Activated naive CD4-positive, alpha-beta T cell treated with anti-CD3 and anti-CD28 coated beads, Interleukin-2, amount 10 ng/mL, durations not matched to agents 7 days and 5 days (primary cell): ENCODE measurements at regions of chr2 and their contacts with region 1.

Region 1: DNA sequence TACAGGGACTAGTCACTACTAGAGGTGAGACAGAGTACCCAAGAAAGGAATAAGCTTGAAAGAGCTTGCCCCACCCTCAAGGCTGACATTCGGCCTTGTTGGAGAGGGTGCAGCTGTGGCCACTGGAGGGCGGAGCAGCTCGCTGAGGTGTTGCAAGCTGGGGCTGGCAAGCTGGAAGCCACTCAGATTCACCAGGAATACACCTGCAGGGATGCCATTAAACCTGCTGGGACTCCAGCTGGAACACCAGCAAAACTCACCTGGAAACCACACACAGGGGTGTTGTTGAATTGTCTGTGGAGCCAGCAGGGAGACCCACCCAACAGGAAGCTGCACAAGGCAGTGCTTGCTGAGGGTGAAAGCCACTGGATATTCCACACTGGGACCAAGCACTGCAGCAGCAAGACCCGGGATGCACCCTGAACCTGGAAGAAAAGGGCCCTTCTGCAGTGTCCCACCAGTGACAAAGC is 26.1 kb downstream of the KCTD18 start:
- DNase-seq: peak; percentile 60
- H3K4me3 Mint-ChIP-seq: no peak overlapping the region
- H3K27ac Mint-ChIP-seq: no peak overlapping the region
- H3K4me1 Mint-ChIP-seq: peaks cover 14% of the 10 kb centered on the region
- H3K27me3 Mint-ChIP-seq: no peaks in the 10 kb centered on the region

Region 2: GRCh38 chr2:199973703-199974102 is 510.1 kb before region 1 on chr2:
- CTCF ChIA-PET with region 1: interaction called, 28 read pairs
- DNase-seq: no peak
- H3K4me3 Mint-ChIP-seq: no peak overlapping the region
- H3K27ac Mint-ChIP-seq: no peak overlapping the region
- H3K4me1 Mint-ChIP-seq: peaks cover 13% of the 10 kb centered on the region
- H3K27me3 Mint-ChIP-seq: no peaks in the 10 kb centered on the region

Region 3: GRCh38 chr2:199979832-199980628 is 503.7 kb before region 1 on chr2:
- CTCF ChIA-PET with region 1: interaction called, 28 read pairs
- DNase-seq: peak; percentile 88
- H3K4me3 Mint-ChIP-seq: no peak overlapping the region
- H3K27ac Mint-ChIP-seq: no peak overlapping the region
- H3K4me1 Mint-ChIP-seq: peaks cover 22% of the 10 kb centered on the region
- H3K27me3 Mint-ChIP-seq: peaks cover 3% of the 10 kb centered on the region

Region 4: GRCh38 chr2:199985625-199986207 is 498.0 kb before region 1 on chr2:
- CTCF ChIA-PET with region 1: interaction called, 27 read pairs
- DNase-seq: peak; percentile 79
- H3K4me3 Mint-ChIP-seq: no peak overlapping the region
- H3K27ac Mint-ChIP-seq: peak overlapping the region; percentile 64
- H3K4me1 Mint-ChIP-seq: peaks cover 6% of the 10 kb centered on the region
- H3K27me3 Mint-ChIP-seq: peaks cover 3% of the 10 kb centered on the region

Region 5: GRCh38 chr2:200077210-200077650 is 406.5 kb before region 1 on chr2:
- CTCF ChIA-PET with region 1: no interaction called
- DNase-seq: no peak
- H3K4me3 Mint-ChIP-seq: no peak overlapping the region
- H3K27ac Mint-ChIP-seq: no peak overlapping the region
- H3K4me1 Mint-ChIP-seq: no peaks in the 10 kb centered on the region
- H3K27me3 Mint-ChIP-seq: no peaks in the 10 kb centered on the region

Region 6: GRCh38 chr2:200435379-200435778 is 48.4 kb before region 1 on chr2:
- CTCF ChIA-PET with region 1: no interaction called
- DNase-seq: no peak
- H3K4me3 Mint-ChIP-seq: no peak overlapping the region
- H3K27ac Mint-ChIP-seq: no peak overlapping the region
- H3K4me1 Mint-ChIP-seq: no peaks in the 10 kb centered on the region
- H3K27me3 Mint-ChIP-seq: no peaks in the 10 kb centered on the region

Region 7: GRCh38 chr2:200471324-200471848 is 12.4 kb before region 1 on chr2:
- CTCF ChIA-PET with region 1: interaction called, 40 read pairs
- DNase-seq: peak; percentile 49
- H3K4me3 Mint-ChIP-seq: no peak overlapping the region
- H3K27ac Mint-ChIP-seq: no peak overlapping the region
- H3K4me1 Mint-ChIP-seq: peaks cover 36% of the 10 kb centered on the region
- H3K27me3 Mint-ChIP-seq: no peaks in the 10 kb centered on the region

Region 8: DNA sequence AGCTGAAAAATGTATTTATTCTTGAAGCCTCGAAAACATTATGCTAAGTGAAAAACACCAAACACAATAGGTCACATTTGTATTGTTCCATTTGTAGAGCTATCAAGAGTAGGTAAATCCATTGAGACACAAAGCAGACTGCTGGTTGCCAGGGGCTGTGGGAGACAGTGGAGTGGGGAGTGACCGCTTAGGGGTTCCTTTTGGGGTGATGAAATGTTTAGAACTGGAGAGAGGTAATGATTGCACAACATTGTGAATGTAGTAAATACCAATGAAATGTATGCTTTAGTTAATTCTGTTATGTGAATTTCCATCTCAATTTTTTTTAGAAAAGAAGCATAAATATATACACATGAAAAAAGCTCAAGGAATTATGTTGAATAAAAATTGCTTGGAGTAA is 10.3 kb after region 1 on chr2:
- CTCF ChIA-PET with region 1: interaction called, 17 read pairs
- DNase-seq: no peak
- H3K4me3 Mint-ChIP-seq: no peak overlapping the region
- H3K27ac Mint-ChIP-seq: no peak overlapping the region
- H3K4me1 Mint-ChIP-seq: no peaks in the 10 kb centered on the region
- H3K27me3 Mint-ChIP-seq: no peaks in the 10 kb centered on the region

Region 9: GRCh38 chr2:200703127-200703925 is 219.6 kb after region 1 on chr2:
- CTCF ChIA-PET with region 1: interaction called, 50 read pairs
- DNase-seq: no peak
- H3K4me3 Mint-ChIP-seq: no peak overlapping the region
- H3K27ac Mint-ChIP-seq: no peak overlapping the region
- H3K4me1 Mint-ChIP-seq: peaks cover 18% of the 10 kb centered on the region
- H3K27me3 Mint-ChIP-seq: peaks cover 8% of the 10 kb centered on the region

Region 10: DNA sequence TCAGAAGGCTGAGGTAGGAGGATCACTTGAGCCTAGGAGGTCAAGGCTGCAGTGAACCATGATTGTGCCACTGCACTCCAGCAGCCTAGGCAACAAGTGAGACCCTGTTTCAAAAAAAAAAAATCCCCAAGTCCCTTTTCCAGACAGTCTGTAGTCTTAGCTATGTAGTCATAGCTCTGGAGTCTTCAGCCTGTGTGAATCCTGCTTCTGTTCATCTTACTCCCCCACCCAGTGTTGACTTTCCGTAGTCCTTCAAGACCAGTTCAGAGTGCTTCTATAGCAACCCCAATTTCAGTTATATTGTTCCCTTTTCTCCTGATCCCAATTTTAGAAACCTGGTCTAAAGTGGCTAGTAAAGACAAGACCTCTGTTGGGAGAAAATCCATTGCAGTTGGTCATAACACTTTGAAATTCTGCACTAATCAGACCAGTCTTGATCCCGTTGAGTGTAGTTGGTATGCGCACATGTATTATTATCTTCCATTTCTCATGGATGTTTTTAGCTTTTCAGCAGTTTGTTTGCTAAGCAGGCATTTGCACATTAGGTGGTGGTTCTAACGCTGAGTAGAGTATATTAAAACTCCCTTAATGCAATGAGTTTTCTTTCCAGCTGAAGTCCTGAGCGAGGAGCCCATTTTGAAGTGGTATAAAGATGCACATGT is 336.9 kb after region 1 on chr2:
- CTCF ChIA-PET with region 1: no interaction called
- DNase-seq: no peak
- H3K4me3 Mint-ChIP-seq: no peak overlapping the region
- H3K27ac Mint-ChIP-seq: no peak overlapping the region
- H3K4me1 Mint-ChIP-seq: peaks cover 2% of the 10 kb centered on the region
- H3K27me3 Mint-ChIP-seq: no peaks in the 10 kb centered on the region